H1 (cell line): ENCODE measurements at regions of chr7 and their contacts with region 1.

Region 1: DNA sequence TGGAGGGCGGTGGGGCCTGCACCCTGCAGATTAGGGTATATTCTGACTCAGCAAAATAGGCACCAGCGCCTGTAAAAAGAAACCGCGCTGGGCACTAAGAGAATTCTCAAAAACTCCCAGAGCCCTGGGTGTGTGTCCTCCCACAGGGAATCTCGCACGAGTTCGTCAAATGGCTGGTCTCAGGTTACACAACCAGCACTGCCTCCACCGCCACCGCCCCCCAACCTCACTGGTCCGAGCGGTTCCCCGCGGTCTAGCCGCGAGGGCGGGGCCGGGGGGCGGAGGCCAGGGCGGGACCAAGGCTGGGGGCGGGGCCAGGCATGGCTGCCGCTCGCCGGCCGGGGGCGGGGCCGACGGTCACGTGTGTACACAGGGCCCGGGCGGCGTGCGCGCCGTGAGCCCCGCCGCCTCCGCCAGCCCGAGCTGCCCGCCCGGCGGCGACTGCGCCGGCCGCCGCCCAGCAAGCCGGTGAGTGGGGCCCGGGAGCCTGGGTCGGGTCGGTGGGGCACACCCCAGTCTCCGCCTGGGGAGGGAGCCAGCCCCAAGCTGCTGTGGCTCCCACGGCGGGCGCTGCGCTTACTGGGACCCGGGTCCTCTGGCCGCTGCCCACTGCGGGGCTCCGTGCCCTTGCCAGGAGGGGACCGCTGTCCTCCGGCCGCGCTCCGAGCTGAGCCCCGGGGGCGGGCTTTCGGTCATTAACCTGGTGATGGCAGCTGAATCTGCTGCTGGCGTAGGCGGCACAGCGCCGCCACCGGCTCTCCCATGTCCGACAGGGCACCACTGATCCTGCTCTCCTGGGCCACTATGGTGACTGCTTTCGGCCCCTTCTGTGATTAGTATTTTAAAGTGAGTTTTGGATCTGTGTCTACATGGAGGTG is at the start of gene GPR146:
- DNase-seq: peak; percentile 74 to 98
- H3K4me3 ChIP-seq: peak within 1 kb of the TSS; percentile 64 to 77 (median 70)
- H3K27ac ChIP-seq: peak within 1 kb of the TSS; percentile 81
- H3K4me1 ChIP-seq: peaks cover 6 to 17% (median 11%) of the 10 kb centered on the region in 4 experiments
- H3K27me3 ChIP-seq: no peaks in the 10 kb centered on the region
- CTCF ChIP-seq: peak; percentile 64 to 76 (median 74)
- EP300 ChIP-seq: 0 out of 3 replicates have a peak, but pooled peaks of 1 of the 2 experiments have one; percentile 11
- POLR2A ChIP-seq: peak in 1 of 2 experiments; percentile 59; a peak in 2 of 3 replicates
- RAD21 ChIP-seq: peak; percentile 26 to 53; a peak in 3 of 4 replicates
- total RNA-seq, gene GPR146: 0.54 and 1.8 TPM in 2 replicates

Region 2: GRCh38 chr7:945556-946255 is 98.7 kb before region 1 on chr7:
- CTCF ChIA-PET with region 1: no interaction called
- POLR2A ChIA-PET with region 1: no interaction called
- DNase-seq: peak; percentile 49 to 86
- H3K4me3 ChIP-seq: peak overlapping the region in 2 of 4 experiments; percentile 11 to 39; a peak in 3 of 8 replicates
- H3K27ac ChIP-seq: peak overlapping the region; percentile 72; the same call in 1 of the 2 replicates
- H3K4me1 ChIP-seq: peaks cover 0 to 26% (median 18%) of the 10 kb centered on the region in 4 experiments; a peak in 6 of 7 replicates
- H3K27me3 ChIP-seq: peaks cover 0 to 4% (median 0%) of the 10 kb centered on the region in 4 experiments; a peak in 2 of 7 replicates
- CTCF ChIP-seq: no peak
- EP300 ChIP-seq: 0 out of 3 replicates have a peak, but pooled peaks of 1 of the 2 experiments have one; percentile 49
- POLR2A ChIP-seq: peak in 1 of 2 experiments; percentile 74; a peak in 2 of 3 replicates
- RAD21 ChIP-seq: 0 out of 4 replicates have a peak, but pooled peaks have one; percentile 1 to 15

Region 3: DNA sequence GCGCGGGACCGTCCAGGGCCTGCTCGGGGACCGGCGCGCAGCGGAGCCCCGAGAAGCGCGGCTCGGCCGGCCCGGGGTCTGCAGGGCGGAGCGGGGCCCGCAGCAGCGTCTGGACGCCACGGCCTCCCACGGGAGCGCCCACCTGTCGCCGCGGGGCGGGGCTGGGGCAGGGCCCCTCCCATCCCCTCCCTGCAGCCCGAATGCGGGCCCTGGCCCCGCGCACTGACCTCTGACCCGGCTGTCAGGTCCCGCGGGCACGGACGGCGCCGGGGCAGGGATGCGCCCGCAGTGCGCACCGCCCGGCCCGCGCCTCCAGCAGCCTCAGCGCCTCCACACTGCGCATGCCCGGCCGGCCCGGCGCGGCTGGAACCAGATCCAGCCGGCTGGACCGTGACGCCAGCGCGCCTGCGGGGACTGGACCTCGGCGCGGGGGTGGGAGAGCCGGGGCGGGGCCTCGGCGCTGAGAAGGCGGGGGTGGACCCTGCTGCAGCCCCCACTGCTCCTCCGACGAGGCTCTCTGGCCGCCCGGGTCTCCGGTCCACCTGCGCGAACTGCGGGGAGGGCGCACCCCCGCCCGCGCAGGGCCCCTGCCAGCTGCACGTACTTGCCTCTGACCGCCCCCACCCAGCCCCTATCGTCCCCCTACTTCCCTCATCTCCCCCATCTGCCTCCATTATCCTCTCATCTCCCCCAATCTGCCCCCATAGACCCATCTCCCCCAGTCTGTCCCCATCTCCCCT is 16.2 kb before region 1 on chr7:
- CTCF ChIA-PET with region 1: interaction called, 5 read pairs
- POLR2A ChIA-PET with region 1: interaction called, 14 read pairs
- DNase-seq: peak; percentile 36 to 88
- H3K4me3 ChIP-seq: peak overlapping the region; percentile 42 to 68 (median 48)
- H3K27ac ChIP-seq: no peak overlapping the region; the same call in 1 of the 2 replicates
- H3K4me1 ChIP-seq: peaks cover 0 to 9% (median 3%) of the 10 kb centered on the region in 4 experiments; a peak in 5 of 7 replicates
- H3K27me3 ChIP-seq: no peaks in the 10 kb centered on the region; a peak in 1 of 7 replicates
- CTCF ChIP-seq: no peak
- EP300 ChIP-seq: peak in 1 of 2 experiments; percentile 86; a peak in 1 of 3 replicates
- POLR2A ChIP-seq: peak in 1 of 2 experiments; percentile 61; a peak in 2 of 3 replicates
- RAD21 ChIP-seq: no peak

Region 4: DNA sequence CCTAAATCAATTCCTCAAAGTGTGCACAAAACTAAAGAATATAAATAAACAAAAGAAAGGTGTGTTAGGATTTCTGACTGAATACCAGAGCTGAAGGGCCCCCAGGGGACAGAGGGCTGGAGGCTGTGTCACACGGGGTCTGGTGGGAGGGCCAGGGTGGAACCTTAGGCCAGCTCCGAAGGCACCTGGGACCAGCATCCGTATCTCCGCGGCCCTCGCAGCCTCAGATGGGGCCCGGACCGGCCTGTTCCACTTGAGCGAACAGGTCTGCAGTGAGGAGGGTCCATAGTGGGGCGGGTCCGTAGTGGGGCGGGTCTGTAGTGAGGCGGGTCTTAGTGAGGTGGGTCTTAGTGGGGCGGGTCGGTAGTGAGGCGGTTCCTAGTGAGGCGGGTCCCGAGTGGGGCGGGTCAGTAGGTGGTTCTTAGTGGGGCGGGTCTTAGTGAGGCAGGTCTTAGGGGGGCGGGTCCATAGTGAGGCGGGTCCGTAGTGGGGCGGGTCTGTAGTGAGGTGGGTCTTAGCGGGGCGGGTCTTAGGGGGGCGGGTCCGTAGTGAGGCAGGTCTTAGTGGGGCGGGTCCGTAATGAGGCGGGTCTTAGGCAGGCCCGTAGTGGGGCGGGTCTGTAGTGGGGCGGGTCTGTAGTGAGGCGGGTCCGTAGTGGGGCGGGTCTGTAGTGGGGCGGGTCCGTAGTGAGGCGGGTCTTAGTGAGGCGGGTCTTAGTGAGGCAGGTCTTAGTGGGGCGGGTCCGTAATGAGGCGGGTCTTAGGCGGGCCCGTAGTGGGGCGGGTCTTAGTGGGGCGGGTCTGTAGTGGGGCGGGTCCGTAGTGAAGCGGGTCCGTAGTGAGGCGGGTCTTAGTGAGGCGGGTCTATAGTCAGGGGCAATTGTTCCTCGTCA is 15.0 kb after region 1 on chr7:
- CTCF ChIA-PET with region 1: interaction called, 36 read pairs
- POLR2A ChIA-PET with region 1: interaction called, 8 read pairs
- DNase-seq: peak; percentile 75 to 93
- H3K4me3 ChIP-seq: peak overlapping the region; percentile 15 to 55 (median 30); a peak in 7 of 8 replicates
- H3K27ac ChIP-seq: no peak overlapping the region
- H3K4me1 ChIP-seq: peaks cover 0 to 17% (median 11%) of the 10 kb centered on the region in 4 experiments; a peak in 6 of 7 replicates
- H3K27me3 ChIP-seq: no peaks in the 10 kb centered on the region
- CTCF ChIP-seq: no peak
- EP300 ChIP-seq: no peak
- POLR2A ChIP-seq: no peak
- RAD21 ChIP-seq: no peak

Region 5: GRCh38 chr7:1144269-1144771 is 99.9 kb after region 1 on chr7:
- CTCF ChIA-PET with region 1: no interaction called
- POLR2A ChIA-PET with region 1: no interaction called
- DNase-seq: no peak
- H3K4me3 ChIP-seq: no peak overlapping the region
- H3K27ac ChIP-seq: no peak overlapping the region
- H3K4me1 ChIP-seq: no peaks in the 10 kb centered on the region
- H3K27me3 ChIP-seq: no peaks in the 10 kb centered on the region
- CTCF ChIP-seq: peak in 1 of 3 experiments; percentile 18; a peak in 1 of 4 replicates
- EP300 ChIP-seq: no peak
- POLR2A ChIP-seq: no peak
- RAD21 ChIP-seq: peak; percentile 19 to 49; a peak in 3 of 4 replicates

Region 6: DNA sequence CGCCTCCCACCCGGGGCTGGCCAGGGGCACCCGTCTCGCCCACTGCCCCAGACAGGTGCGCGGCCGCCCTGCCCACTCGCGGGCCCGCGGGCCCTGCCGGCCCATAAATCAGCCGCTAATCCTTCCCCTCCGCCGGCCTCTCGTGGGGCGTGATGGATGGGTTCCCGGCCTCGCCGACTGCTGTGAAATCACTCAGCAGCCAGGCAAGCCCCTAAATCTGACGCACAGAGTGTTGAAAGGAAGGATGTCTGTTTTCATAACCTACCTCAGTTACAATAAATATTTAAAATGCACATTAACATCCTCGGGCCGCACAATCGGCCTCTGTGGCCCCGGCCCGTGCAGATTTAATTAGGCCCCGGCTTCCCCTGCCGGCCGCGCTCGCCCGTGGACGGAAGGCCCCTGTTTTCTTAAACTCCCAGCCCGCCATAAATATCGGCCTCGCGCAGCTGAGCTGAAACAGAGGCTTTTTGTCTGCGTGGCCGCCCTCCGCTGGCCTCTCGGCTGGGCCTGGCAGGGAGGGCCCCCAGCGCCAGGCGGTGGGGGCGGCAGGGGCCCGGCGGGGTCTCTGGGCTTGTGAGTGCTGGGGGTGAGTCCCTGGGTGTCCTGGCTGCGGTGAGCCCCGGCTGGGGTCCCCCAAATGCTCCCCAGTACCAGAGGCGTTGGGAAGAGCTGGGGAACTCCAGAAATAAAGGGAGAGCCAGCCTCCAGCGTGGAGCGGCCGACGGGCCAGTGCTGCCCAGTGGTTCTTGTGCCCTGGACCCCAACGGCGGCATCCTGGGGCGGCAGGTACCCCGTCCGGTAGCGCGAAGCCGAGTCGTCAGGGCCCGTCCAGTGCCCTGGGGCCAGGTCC is 279.0 kb after region 1 on chr7:
- CTCF ChIA-PET with region 1: no interaction called
- POLR2A ChIA-PET with region 1: no interaction called
- DNase-seq: no peak
- H3K4me3 ChIP-seq: no peak overlapping the region
- H3K27ac ChIP-seq: no peak overlapping the region
- H3K4me1 ChIP-seq: no peaks in the 10 kb centered on the region; a peak in 1 of 7 replicates
- H3K27me3 ChIP-seq: no peaks in the 10 kb centered on the region
- CTCF ChIP-seq: no peak
- EP300 ChIP-seq: no peak
- POLR2A ChIP-seq: no peak
- RAD21 ChIP-seq: no peak